ENCODE measurements at regions of chr22 and their contacts with region 1.

Region 1: DNA sequence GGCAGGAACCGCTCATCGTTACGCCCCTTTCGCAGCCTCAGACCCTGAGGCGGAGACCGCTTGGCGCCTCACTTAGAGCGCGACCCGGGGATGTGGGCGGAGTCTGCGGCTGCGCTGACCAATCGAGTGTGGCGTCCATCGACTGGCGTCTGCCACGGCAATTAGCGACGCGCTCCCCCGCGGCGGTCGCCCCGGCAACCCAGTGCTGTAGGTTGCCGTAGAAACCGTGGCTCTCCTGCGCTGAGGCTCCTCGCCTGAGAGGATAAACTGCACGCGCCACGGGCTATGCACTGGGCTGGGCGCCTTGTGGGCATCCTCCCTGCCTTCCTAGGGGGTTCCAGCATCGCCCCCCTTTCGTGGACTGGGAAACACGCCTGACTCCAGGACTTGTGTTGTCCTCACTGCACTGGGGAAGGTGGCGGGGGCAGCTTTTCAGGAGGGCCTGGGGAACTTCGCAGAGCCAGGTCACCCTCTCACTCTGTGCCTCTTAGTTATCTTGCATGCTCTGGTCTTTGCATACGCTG is 701 bp upstream of the P2RX6 start:
- DNase-seq: peak; percentile 85 to 89 (median 88)
- H3K4me3 ChIP-seq: peak overlapping the region; percentile 7 to 73 (median 27)
- H3K4me3 Mint-ChIP-seq: peak overlapping the region; percentile 78 to 92
- H3K27ac ChIP-seq: no peak overlapping the region
- H3K27ac Mint-ChIP-seq: peak overlapping the region; percentile 21 to 92 (median 79)
- H3K4me1 ChIP-seq: peaks cover 15 to 19% of the 10 kb centered on the region in 2 donors
- H3K4me1 Mint-ChIP-seq: peaks cover 13% of the 10 kb centered on the region
- H3K27me3 ChIP-seq: peaks cover 0 to 14% of the 10 kb centered on the region in 2 donors
- H3K27me3 Mint-ChIP-seq: peaks cover 9 to 42% (median 13%) of the 10 kb centered on the region in 3 donors
- CTCF ChIP-seq: no peak

Region 2: GRCh38 chr22:20469110-20469868 is 545.0 kb before region 1 on chr22:
- intact Hi-C with region 1: no loop called
- DNase-seq: no peak
- H3K4me3 ChIP-seq: no peak overlapping the region
- H3K4me3 Mint-ChIP-seq: no peak overlapping the region
- H3K27ac ChIP-seq: no peak overlapping the region
- H3K27ac Mint-ChIP-seq: peak overlapping the region in 1 of 7 donors; percentile 0
- H3K4me1 ChIP-seq: peaks cover 10 to 24% of the 10 kb centered on the region in 2 donors
- H3K4me1 Mint-ChIP-seq: peaks cover 16% of the 10 kb centered on the region
- H3K27me3 ChIP-seq: no peaks in the 10 kb centered on the region
- H3K27me3 Mint-ChIP-seq: no peaks in the 10 kb centered on the region
- CTCF ChIP-seq: no peak

Region 3: GRCh38 chr22:20647586-20648305 is 366.5 kb before region 1 on chr22:
- intact Hi-C with region 1: no loop called
- DNase-seq: no peak
- H3K4me3 ChIP-seq: no peak overlapping the region
- H3K4me3 Mint-ChIP-seq: no peak overlapping the region
- H3K27ac ChIP-seq: no peak overlapping the region
- H3K27ac Mint-ChIP-seq: no peak overlapping the region
- H3K4me1 ChIP-seq: no peaks in the 10 kb centered on the region
- H3K4me1 Mint-ChIP-seq: no peaks in the 10 kb centered on the region
- H3K27me3 ChIP-seq: no peaks in the 10 kb centered on the region
- H3K27me3 Mint-ChIP-seq: peaks cover 0 to 4% (median 3%) of the 10 kb centered on the region in 3 donors
- CTCF ChIP-seq: no peak

Region 4: DNA sequence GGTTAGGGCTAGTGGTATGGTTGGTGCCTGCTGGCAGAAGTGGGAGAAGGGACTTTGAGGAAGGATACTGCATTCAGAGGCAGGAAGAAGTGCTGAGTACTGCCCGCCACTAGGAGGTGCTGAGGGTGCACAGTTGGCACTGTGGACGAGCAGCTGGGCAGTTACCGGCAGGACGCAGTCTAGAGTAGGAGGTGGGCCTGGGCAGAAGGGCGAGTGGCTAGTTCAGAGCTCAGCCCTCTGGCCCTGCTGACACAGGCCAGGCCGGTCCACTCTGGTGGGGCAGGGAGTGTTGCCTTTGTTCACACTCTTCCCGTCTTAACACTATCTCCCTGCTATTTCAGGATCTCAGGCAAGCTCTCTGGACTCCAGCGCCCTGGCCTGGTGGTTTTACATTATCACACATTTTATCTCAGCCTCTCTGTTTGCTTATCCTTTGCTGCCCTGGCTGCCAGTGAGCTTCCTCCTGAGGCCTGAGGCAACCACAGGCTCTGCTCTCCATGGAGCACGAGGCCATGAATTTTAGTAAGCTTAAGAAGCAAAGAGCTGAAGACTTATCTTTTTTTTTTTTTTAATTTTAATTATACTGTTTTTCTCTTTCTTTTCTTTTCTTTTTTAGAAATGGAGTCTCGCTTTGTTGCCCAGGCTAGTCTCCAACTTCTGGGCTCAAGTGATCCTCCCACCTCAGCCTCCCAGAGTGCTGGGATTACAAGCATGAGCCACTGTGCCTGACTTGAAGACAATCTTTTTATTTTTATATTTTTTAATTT is 128.5 kb before region 1 on chr22:
- intact Hi-C with region 1: loop called in 1 of 2 experiments (anchors 10 kb)
- DNase-seq: peak; percentile 76 to 84 (median 84)
- H3K4me3 ChIP-seq: no peak overlapping the region
- H3K4me3 Mint-ChIP-seq: peak overlapping the region; percentile 14 to 41
- H3K27ac ChIP-seq: peak overlapping the region; percentile 23 to 54
- H3K27ac Mint-ChIP-seq: peak overlapping the region; percentile 53 to 93 (median 78)
- H3K4me1 ChIP-seq: peaks cover 3 to 4% of the 10 kb centered on the region in 2 donors
- H3K4me1 Mint-ChIP-seq: peaks cover 8% of the 10 kb centered on the region
- H3K27me3 ChIP-seq: no peaks in the 10 kb centered on the region
- H3K27me3 Mint-ChIP-seq: peaks cover 0 to 3% (median 0%) of the 10 kb centered on the region in 3 donors
- CTCF ChIP-seq: peak; percentile 98

Region 5: GRCh38 chr22:20965104-20965887 is 49.0 kb before region 1 on chr22:
- intact Hi-C with region 1: loop called in 1 of 2 experiments (anchors 5 kb)
- DNase-seq: no peak
- H3K4me3 ChIP-seq: peak overlapping the region; percentile 16 to 69 (median 24)
- H3K4me3 Mint-ChIP-seq: peak overlapping the region; percentile 71 to 80
- H3K27ac ChIP-seq: no peak overlapping the region
- H3K27ac Mint-ChIP-seq: no peak overlapping the region
- H3K4me1 ChIP-seq: peaks cover 57 to 68% of the 10 kb centered on the region in 2 donors
- H3K4me1 Mint-ChIP-seq: peaks cover 59% of the 10 kb centered on the region
- H3K27me3 ChIP-seq: peaks cover 3 to 16% of the 10 kb centered on the region in 2 donors
- H3K27me3 Mint-ChIP-seq: peaks cover 18 to 29% (median 26%) of the 10 kb centered on the region in 3 donors
- CTCF ChIP-seq: no peak

Measured in CD14-positive monocyte (primary cell).